ENCODE measurements at regions of chr6 and their contacts with region 1.

Region 1: DNA sequence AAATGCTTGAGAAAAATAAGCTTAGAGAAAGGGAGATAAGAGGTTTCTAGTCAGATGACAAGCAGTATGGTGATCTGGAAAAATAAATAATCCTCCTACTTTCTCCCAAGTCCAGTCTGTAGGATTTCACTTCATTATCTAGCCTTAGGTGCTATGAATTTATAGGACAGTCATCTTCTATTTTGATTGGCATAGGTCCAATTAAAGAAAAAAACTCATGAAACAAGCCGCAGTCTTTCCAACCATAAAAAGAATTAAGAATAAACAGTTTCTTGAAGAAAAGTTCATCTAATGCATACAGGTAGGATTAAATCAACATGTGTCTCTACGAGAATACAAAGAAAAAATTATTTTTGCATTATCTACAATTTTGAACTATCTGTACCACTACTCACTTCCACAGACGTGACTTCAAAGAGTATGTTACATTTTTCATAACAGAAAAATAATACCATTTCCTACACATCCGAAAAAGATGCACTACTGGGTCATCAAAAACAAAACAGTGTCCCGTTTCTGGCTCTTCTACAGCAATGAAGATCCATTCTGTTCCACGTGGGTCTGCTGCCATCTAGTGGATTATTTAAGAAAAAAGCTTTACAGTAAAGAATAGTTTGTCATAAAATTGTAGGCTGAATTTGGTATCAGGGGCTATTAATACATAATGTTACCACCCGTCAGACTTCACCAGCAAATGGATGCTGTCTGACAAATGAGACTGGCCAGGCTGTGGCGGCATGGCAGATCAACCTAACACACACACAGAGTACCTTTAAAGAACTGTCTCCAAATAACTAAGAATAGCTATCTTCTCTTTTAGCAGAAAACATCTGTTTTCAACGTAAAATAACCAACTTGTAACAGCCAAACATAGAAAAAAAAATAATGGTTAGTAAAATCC is 28.9 kb downstream of the STX7 start:
- DNase-seq: peak; percentile 83
- ATAC-seq: peak; percentile 78
- H3K4me3 ChIP-seq: peak overlapping the region in 1 of 5 experiments; percentile 5
- H3K4me3 Mint-ChIP-seq: peak overlapping the region; percentile 41
- H3K27ac ChIP-seq: peak overlapping the region; percentile 27 to 92
- H3K27ac Mint-ChIP-seq: peak overlapping the region; percentile 75
- H3K4me1 ChIP-seq: peaks cover 59 to 88% of the 10 kb centered on the region in 2 donors
- H3K4me1 Mint-ChIP-seq: peaks cover 85% of the 10 kb centered on the region
- H3K27me3 ChIP-seq: no peaks in the 10 kb centered on the region
- H3K27me3 Mint-ChIP-seq: no peaks in the 10 kb centered on the region
- CTCF ChIP-seq: peak; percentile 84

Region 2: DNA sequence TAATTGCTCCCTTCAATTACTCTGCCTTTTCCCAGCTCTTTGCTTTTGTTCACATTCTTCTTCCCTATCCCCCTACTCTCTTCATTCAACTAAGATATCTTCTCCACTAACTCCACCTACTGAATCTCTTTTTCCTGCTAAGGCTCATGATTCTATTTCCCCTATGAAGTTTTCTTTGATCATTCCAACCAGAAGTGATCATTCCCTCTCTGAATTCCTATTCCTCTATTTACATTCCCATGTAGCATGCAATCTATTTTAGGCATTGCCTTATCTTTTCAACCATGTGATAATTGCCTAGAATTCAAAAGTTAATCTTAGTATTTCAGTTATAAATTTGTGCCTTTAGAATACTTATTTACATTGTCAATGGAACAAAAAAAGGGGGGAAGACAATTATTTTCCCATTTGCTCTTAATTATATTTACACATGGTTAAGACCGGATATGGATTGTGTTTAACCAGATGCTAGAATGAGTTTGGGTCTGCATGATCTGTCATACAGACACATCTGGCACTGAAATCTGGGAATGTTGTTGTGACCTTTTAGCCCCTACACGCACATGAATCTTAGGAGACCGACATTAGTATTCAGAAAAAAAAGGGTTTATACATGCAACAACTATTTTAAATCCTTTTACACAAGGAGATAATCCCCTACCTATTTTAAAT is 103.5 kb before region 1 on chr6:
- CTCF ChIA-PET with region 1: interaction called, 6 read pairs
- POLR2A ChIA-PET with region 1: interaction called, 12 read pairs
- intact Hi-C with region 1: no loop called
- DNase-seq: no peak
- ATAC-seq: no peak
- H3K4me3 ChIP-seq: no peak overlapping the region
- H3K4me3 Mint-ChIP-seq: no peak overlapping the region
- H3K27ac ChIP-seq: no peak overlapping the region
- H3K27ac Mint-ChIP-seq: no peak overlapping the region
- H3K4me1 ChIP-seq: peaks cover 4 to 14% of the 10 kb centered on the region in 2 donors
- H3K4me1 Mint-ChIP-seq: peaks cover 19% of the 10 kb centered on the region
- H3K27me3 ChIP-seq: no peaks in the 10 kb centered on the region
- H3K27me3 Mint-ChIP-seq: no peaks in the 10 kb centered on the region
- CTCF ChIP-seq: no peak

Region 3: DNA sequence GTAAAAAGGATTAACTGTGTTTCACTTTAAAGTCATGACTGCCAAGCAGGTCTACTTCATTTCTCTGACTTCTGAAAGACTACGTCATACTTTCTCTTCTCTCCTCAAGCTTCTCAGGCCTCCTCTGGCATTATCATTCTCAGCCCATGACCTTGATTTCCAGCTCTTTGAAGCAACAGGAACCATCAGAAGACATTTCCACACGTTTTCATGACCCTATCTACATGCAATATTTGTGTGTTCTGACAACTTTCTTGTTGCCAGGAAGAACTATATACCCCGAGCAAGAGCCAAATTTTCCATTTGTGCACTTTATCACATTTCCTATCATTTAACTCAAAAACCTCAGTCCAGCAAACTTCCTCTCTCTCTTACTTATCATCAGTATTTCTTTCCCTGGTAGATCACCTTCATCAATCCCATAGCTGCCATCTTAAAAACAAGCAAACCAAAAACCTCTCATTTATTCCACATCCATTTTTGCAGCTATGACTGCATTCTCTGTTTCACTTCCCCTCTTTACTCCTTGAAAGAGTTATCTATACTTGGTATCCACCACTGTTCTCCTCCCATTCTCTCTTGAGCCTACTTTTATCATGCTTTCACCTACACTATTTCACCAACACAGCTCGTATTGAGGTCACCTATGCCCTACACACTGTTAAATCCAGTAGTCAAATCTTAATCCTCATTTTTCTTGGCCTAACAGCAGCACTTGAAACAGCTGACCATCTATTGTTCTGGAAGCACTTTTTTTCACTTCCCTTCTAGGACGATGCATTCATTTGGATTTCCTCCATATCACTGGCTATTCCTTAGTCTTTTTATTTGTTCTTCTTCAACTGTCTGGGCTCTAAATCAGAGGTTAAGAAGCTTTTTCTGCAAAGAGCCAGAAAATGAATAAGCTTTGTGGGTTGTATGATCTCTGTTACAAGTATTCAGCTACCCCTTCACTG is 18.2 kb before region 1 on chr6:
- CTCF ChIA-PET with region 1: interaction called, 15 read pairs
- POLR2A ChIA-PET with region 1: interaction called, 7 read pairs
- intact Hi-C with region 1: loop called (anchors 2 kb)
- DNase-seq: no peak
- ATAC-seq: peak; percentile 41
- H3K4me3 ChIP-seq: no peak overlapping the region
- H3K4me3 Mint-ChIP-seq: no peak overlapping the region
- H3K27ac ChIP-seq: peak overlapping the region; percentile 34 to 62
- H3K27ac Mint-ChIP-seq: no peak overlapping the region
- H3K4me1 ChIP-seq: peaks cover 15 to 22% of the 10 kb centered on the region in 2 donors
- H3K4me1 Mint-ChIP-seq: peaks cover 7% of the 10 kb centered on the region
- H3K27me3 ChIP-seq: no peaks in the 10 kb centered on the region
- H3K27me3 Mint-ChIP-seq: no peaks in the 10 kb centered on the region
- CTCF ChIP-seq: no peak

Region 4: GRCh38 chr6:132498638-132499037 is 14.6 kb after region 1 on chr6:
- CTCF ChIA-PET with region 1: interaction called, 70 read pairs
- POLR2A ChIA-PET with region 1: interaction called, 4 read pairs
- intact Hi-C with region 1: no loop called
- DNase-seq: peak; percentile 71
- ATAC-seq: peak; percentile 70
- H3K4me3 ChIP-seq: peak overlapping the region in 1 of 5 experiments; percentile 49
- H3K4me3 Mint-ChIP-seq: peak overlapping the region; percentile 74
- H3K27ac ChIP-seq: peak overlapping the region; percentile 73 to 88
- H3K27ac Mint-ChIP-seq: peak overlapping the region; percentile 87
- H3K4me1 ChIP-seq: peaks cover 81 to 84% of the 10 kb centered on the region in 2 donors
- H3K4me1 Mint-ChIP-seq: peaks cover 85% of the 10 kb centered on the region
- H3K27me3 ChIP-seq: no peaks in the 10 kb centered on the region
- H3K27me3 Mint-ChIP-seq: no peaks in the 10 kb centered on the region
- CTCF ChIP-seq: no peak